AG04450 (cell line): ENCODE measurements at regions of chr20 and their contacts with region 1.

Region 1: GRCh38 chr20:59508729-59509128 is 95.6 kb upstream of the PHACTR3 start:
- DNase-seq: no peak
- H3K4me3 ChIP-seq: no peak overlapping the region
- H3K27ac ChIP-seq: no peak overlapping the region
- H3K27me3 ChIP-seq: no peaks in the 10 kb centered on the region
- CTCF ChIP-seq: no peak

Region 2: GRCh38 chr20:59495894-59496510 is 12.7 kb before region 1 on chr20:
- CTCF ChIA-PET with region 1: interaction called, 23 read pairs
- POLR2A ChIA-PET with region 1: no interaction called
- DNase-seq: peak; percentile 18
- H3K4me3 ChIP-seq: no peak overlapping the region
- H3K27ac ChIP-seq: no peak overlapping the region
- H3K27me3 ChIP-seq: no peaks in the 10 kb centered on the region
- CTCF ChIP-seq: peak; percentile 89